IMR-90 (cell line): ENCODE measurements at regions of chr9 and their contacts with region 1.

Region 1: DNA sequence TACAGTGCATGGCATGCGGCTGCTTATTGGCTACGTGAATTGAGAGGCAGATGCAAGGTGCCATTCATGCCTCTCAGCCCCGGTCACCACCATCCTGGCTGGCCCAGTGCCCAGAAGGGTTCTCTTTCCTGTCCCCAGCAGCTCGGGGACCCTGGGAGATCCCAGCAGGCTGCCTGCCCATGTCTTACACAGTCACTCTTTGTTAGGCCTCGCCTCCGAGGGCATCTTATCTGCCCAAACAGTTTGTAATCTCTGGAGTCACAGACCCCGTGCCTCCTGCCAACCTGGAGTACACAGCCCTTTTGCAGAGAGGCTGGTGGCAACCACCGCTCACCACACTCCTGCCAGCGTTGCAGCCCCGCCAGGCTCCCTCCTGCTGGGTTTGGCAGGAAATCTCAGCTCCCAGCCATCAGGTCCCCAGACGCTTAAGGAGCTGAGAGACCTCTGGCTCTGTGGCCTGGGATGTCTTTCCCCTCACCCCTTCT is 7.0 kb upstream of the AK1 start:
- DNase-seq: no peak
- ATAC-seq: peak; percentile 36
- H3K4me3 ChIP-seq: no peak overlapping the region
- H3K27ac ChIP-seq: no peak overlapping the region
- H3K4me1 ChIP-seq: peaks cover 4% of the 10 kb centered on the region
- H3K27me3 ChIP-seq: no peaks in the 10 kb centered on the region
- CTCF ChIP-seq: no peak
- POLR2A ChIP-seq: no peak
- RAD21 ChIP-seq: no peak

Region 2: GRCh38 chr9:127899128-127899946 is 14.9 kb after region 1 on chr9 and contains the start of gene ST6GALNAC6:
- CTCF ChIA-PET with region 1: no interaction called
- POLR2A ChIA-PET with region 1: interaction called, 13 read pairs
- dilution Hi-C with region 1: no loop called
- in situ Hi-C with region 1: no loop called
- intact Hi-C with region 1: no loop called
- DNase-seq: peak; percentile 68
- ATAC-seq: peak; percentile 83
- H3K4me3 ChIP-seq: peak within 1 kb of the TSS; percentile 98
- H3K27ac ChIP-seq: peak within 1 kb of the TSS; percentile 95
- H3K4me1 ChIP-seq: peaks cover 30% of the 10 kb centered on the region
- H3K27me3 ChIP-seq: no peaks in the 10 kb centered on the region
- CTCF ChIP-seq: no peak
- POLR2A ChIP-seq: no peak
- RAD21 ChIP-seq: no peak
- total RNA-seq, gene ST6GALNAC6: 35.3 and 35.7 TPM in 2 replicates